Activated CD4-positive, alpha-beta memory T cell treated with anti-CD3 and anti-CD28 coated beads for 36 hours (primary cell): ENCODE measurements at regions of chr4 and their contacts with region 1.

Region 1: DNA sequence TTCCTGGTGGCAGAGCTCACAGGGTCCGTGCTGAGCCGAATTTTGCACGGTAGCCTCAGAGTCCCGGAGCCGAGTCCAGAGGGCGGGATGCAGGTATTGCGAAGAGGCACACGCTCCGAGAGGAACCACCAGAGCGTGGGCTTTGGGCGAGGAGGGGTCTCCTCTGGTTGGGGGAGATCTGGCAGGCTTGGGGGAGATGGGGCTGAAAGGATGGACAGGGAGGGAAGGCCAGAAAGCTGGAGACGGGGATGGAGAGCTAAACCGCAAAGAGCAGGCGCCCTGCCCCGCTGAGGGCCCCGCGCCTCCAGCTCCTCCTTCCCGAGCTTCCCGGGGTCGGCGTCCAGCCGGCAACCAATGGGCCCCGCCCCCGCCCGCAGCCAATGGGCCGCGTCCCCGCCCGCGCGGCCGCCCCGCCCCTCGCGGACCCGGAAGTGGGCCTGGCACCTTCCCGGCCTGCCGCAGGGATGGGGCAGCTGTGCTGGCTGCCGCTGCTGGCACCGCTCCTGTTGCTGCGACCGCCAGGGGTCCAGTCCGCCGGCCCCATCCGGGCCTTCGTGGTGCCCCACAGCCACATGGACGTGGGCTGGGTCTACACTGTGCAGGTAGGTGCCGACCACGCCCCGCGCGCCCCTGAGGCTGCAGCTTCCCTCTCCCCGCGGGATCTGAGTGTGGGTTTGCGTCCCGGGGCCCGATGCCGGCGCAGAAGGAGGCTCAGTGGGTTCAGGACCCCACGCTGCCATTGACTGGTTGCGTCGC is at the start of gene MAN2B2:
- DNase-seq: peak; percentile 90
- H3K4me3 Mint-ChIP-seq: peak within 1 kb of the TSS; percentile 80
- H3K27ac Mint-ChIP-seq: peak within 1 kb of the TSS; percentile 73
- H3K4me1 Mint-ChIP-seq: peaks cover 6% of the 10 kb centered on the region
- H3K27me3 Mint-ChIP-seq: no peaks in the 10 kb centered on the region
- total RNA-seq, gene MAN2B2: 16.5 to 18.0 TPM

Region 2: GRCh38 chr4:6546681-6547447 is 28.1 kb before region 1 on chr4:
- CTCF ChIA-PET with region 1: interaction called, 18 read pairs
- POLR2A ChIA-PET with region 1: no interaction called
- intact Hi-C with region 1: no loop called
- DNase-seq: peak; percentile 54
- H3K4me3 Mint-ChIP-seq: no peak overlapping the region
- H3K27ac Mint-ChIP-seq: no peak overlapping the region
- H3K4me1 Mint-ChIP-seq: no peaks in the 10 kb centered on the region
- H3K27me3 Mint-ChIP-seq: peaks cover 33% of the 10 kb centered on the region